ENCODE measurements at regions of chr10 and their contacts with region 1.

Region 1: GRCh38 chr10:8183241-8183704 is 128.8 kb downstream of the GATA3 start:
- DNase-seq: no peak
- H3K4me3 ChIP-seq: no peak overlapping the region
- H3K4me3 Mint-ChIP-seq: no peak overlapping the region
- H3K27ac Mint-ChIP-seq: no peak overlapping the region
- H3K4me1 ChIP-seq: no peaks in the 10 kb centered on the region
- H3K4me1 Mint-ChIP-seq: peaks cover 6% of the 10 kb centered on the region
- H3K27me3 ChIP-seq: no peaks in the 10 kb centered on the region
- H3K27me3 Mint-ChIP-seq: no peaks in the 10 kb centered on the region
- CTCF ChIP-seq: no peak

Region 2: GRCh38 chr10:8138471-8138870 is 44.8 kb before region 1 on chr10:
- CTCF ChIA-PET with region 1: no interaction called
- POLR2A ChIA-PET with region 1: no interaction called
- intact Hi-C with region 1: loop called (anchors 5 kb)
- DNase-seq: no peak
- H3K4me3 ChIP-seq: no peak overlapping the region
- H3K4me3 Mint-ChIP-seq: no peak overlapping the region
- H3K27ac Mint-ChIP-seq: no peak overlapping the region
- H3K4me1 ChIP-seq: no peaks in the 10 kb centered on the region
- H3K4me1 Mint-ChIP-seq: no peaks in the 10 kb centered on the region
- H3K27me3 ChIP-seq: no peaks in the 10 kb centered on the region
- H3K27me3 Mint-ChIP-seq: no peaks in the 10 kb centered on the region
- CTCF ChIP-seq: no peak